ENCODE measurements at regions of chr1 and their contacts with region 1.

Region 1: DNA sequence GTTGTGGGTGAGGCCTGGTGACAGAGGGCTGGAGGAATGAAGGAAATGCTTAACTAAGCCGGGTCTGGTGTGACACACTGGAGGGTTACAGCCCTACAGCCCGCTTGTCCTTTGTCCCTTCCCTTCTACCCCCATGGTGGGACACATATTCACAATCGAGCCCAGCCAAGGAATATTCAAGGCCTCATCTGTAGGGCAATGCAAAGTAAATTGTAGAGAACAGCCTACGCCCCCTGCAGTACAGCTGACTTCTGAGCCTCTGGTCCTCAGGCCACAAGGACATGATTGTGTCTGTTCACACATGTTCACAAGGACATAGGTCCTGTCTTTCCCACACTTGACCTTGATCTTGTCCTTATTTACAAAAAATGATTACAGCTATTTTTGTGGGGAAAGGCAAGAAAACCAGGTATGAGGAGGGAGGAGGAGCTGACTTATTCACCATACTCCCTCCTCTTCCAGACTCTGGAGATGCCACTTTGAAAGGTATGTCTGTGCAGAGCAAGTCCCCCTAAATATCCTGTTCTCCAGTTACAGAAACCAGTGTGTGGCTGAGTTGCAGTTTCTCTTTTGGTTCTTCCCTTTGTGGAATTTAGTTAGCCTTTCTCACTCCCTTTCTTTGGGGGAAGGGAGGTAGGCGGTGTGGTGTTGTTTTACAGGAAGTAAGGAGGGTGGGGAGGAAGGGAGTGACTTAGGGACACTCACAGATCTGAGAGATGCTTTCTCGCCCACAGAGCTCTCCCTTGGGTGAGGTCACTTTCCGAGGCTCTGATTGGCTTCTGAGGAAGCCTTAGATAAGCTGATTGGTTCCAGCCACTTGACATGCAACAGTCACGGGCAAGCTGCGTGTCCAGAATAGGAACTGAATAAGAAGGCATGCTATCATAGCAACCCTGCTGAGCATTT is 14.6 kb downstream of the POLR3GL start:
- DNase-seq: peak; percentile 92
- H3K4me3 Mint-ChIP-seq: no peak overlapping the region
- H3K27ac Mint-ChIP-seq: no peak overlapping the region
- H3K4me1 Mint-ChIP-seq: peaks cover 3% of the 10 kb centered on the region
- H3K27me3 Mint-ChIP-seq: no peaks in the 10 kb centered on the region

Region 2: GRCh38 chr1:145757420-145757819 is 221.7 kb before region 1 on chr1:
- CTCF ChIA-PET with region 1: no interaction called
- POLR2A ChIA-PET with region 1: no interaction called
- intact Hi-C with region 1: no loop called
- DNase-seq: no peak
- H3K4me3 Mint-ChIP-seq: no peak overlapping the region
- H3K27ac Mint-ChIP-seq: no peak overlapping the region
- H3K4me1 Mint-ChIP-seq: no peaks in the 10 kb centered on the region
- H3K27me3 Mint-ChIP-seq: no peaks in the 10 kb centered on the region

Region 3: GRCh38 chr1:145947551-145947950 is 31.6 kb before region 1 on chr1:
- CTCF ChIA-PET with region 1: no interaction called
- POLR2A ChIA-PET with region 1: no interaction called
- intact Hi-C with region 1: no loop called
- DNase-seq: no peak
- H3K4me3 Mint-ChIP-seq: no peak overlapping the region
- H3K27ac Mint-ChIP-seq: no peak overlapping the region
- H3K4me1 Mint-ChIP-seq: peaks cover 26% of the 10 kb centered on the region
- H3K27me3 Mint-ChIP-seq: no peaks in the 10 kb centered on the region

Region 4: GRCh38 chr1:145957443-145958319 is 21.4 kb before region 1 on chr1 and contains the start of gene LIX1L:
- CTCF ChIA-PET with region 1: interaction called, 62 read pairs
- POLR2A ChIA-PET with region 1: interaction called, 32 read pairs
- intact Hi-C with region 1: no loop called
- DNase-seq: peak; percentile 97
- H3K4me3 Mint-ChIP-seq: peak within 1 kb of the TSS; percentile 87
- H3K27ac Mint-ChIP-seq: peak within 1 kb of the TSS; percentile 79
- H3K4me1 Mint-ChIP-seq: peaks cover 57% of the 10 kb centered on the region
- H3K27me3 Mint-ChIP-seq: no peaks in the 10 kb centered on the region
- total RNA-seq, gene LIX1L: 46.6 to 47.8 TPM

Region 5: GRCh38 chr1:145990249-145991097 is 11.4 kb after region 1 on chr1:
- CTCF ChIA-PET with region 1: interaction called, 72 read pairs
- POLR2A ChIA-PET with region 1: interaction called, 183 read pairs
- intact Hi-C with region 1: no loop called
- DNase-seq: no peak
- H3K4me3 Mint-ChIP-seq: no peak overlapping the region
- H3K27ac Mint-ChIP-seq: peak overlapping the region; percentile 6
- H3K4me1 Mint-ChIP-seq: peaks cover 61% of the 10 kb centered on the region
- H3K27me3 Mint-ChIP-seq: no peaks in the 10 kb centered on the region

Region 6: DNA sequence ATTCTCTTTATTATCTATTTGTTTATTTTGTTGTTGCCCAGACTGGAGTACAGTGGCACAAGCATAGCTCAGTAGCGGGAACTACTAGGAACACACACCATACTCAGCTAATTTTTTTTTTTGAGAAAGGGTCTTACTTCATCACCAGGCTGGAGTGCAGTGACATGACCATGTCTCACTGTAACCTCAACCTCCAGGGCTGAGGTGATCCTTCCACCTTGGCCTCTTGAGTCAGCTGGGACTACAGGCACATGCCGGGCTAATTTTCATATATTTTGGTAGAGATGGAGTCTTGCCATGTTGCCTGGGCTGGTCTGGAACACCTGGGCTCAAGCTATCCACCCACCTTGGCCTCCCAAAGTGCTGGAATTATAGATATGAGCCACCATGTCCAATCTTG is 22.6 kb after region 1 on chr1:
- CTCF ChIA-PET with region 1: interaction called, 222 read pairs
- POLR2A ChIA-PET with region 1: interaction called, 183 read pairs
- intact Hi-C with region 1: loop called (anchors 1 kb)
- DNase-seq: no peak
- H3K4me3 Mint-ChIP-seq: no peak overlapping the region
- H3K27ac Mint-ChIP-seq: peak overlapping the region; percentile 82
- H3K4me1 Mint-ChIP-seq: peaks cover 69% of the 10 kb centered on the region
- H3K27me3 Mint-ChIP-seq: no peaks in the 10 kb centered on the region

Region 7: GRCh38 chr1:146012737-146013403 is 33.8 kb after region 1 on chr1:
- CTCF ChIA-PET with region 1: interaction called, 222 read pairs
- POLR2A ChIA-PET with region 1: interaction called, 25 read pairs
- intact Hi-C with region 1: loop called (anchors 1 kb)
- DNase-seq: peak; percentile 63
- H3K4me3 Mint-ChIP-seq: no peak overlapping the region
- H3K27ac Mint-ChIP-seq: no peak overlapping the region
- H3K4me1 Mint-ChIP-seq: peaks cover 10% of the 10 kb centered on the region
- H3K27me3 Mint-ChIP-seq: peaks cover 4% of the 10 kb centered on the region

Region 8: DNA sequence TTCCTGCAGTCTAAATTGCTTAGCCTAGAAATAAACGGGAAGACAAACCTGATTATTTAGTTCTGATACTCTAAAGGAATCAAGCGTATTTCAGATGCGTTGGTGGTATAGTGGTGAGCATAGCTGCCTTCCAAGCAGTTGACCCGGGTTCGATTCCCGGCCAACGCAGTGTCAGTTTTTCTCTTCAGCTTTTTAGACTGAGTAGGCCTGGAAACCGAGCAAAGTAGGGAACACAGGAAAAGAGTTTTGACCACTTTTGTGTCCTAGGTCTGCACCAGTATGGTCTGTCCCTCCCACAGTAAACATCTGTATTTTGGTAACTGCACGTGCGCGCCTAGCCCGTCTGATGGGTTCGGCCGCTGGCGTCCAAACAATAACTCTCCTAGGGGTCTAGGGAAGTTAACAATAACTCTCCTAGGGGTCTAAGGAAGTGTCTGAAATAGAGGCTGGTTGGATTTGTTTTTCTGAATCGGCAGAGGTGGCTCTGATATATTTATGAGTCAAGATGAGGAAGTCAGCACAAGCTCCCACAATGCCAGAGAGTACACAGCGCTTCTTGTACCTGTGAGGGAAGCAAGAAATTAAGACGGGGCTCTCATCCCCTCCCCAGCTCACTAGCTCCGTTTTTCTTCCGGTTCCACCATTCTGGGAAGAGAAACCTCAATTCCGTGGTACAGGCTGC is 58.0 kb after region 1 on chr1:
- CTCF ChIA-PET with region 1: interaction called, 12 read pairs
- POLR2A ChIA-PET with region 1: interaction called, 4 read pairs
- intact Hi-C with region 1: loop called (anchors 1 kb)
- DNase-seq: peak; percentile 87
- H3K4me3 Mint-ChIP-seq: peak overlapping the region; percentile 100
- H3K27ac Mint-ChIP-seq: peak overlapping the region; percentile 99
- H3K4me1 Mint-ChIP-seq: peaks cover 32% of the 10 kb centered on the region
- H3K27me3 Mint-ChIP-seq: peaks cover 9% of the 10 kb centered on the region